ENCODE measurements at regions of chr6 and their contacts with region 1.

Region 1: GRCh38 chr6:52517502-52518278 is 59.2 kb downstream of the TRAM2 start:
- DNase-seq: peak; percentile 98
- ATAC-seq: peak; percentile 74
- H3K4me3 ChIP-seq: no peak overlapping the region
- H3K27ac ChIP-seq: peak overlapping the region; percentile 90
- H3K4me1 ChIP-seq: peaks cover 48% of the 10 kb centered on the region
- H3K27me3 ChIP-seq: no peaks in the 10 kb centered on the region
- CTCF ChIP-seq: no peak
- POLR2A ChIP-seq: peak; percentile 72
- RAD21 ChIP-seq: peak; percentile 30; the same call in 1 of the 2 replicates

Region 2: DNA sequence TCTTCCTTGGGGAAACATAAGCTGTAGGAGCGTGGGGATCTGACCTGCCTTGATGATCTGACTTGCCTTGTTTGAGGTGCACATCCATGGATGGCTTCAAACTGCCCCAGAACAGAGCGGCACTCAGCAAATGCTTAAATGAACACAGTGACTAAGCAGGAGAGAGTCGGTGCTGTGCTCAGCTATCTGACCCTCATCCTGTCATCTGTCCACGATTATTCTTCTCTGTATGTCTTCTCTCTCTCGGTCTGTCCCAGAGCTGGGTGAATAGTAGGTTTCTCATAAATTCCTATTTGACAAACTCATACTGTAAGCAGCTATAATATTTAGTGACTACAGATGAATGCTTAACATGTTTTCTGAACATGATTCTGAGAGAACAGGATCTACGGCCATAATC is 21.9 kb after region 1 on chr6:
- CTCF ChIA-PET with region 1: no interaction called
- POLR2A ChIA-PET with region 1: no interaction called
- dilution Hi-C with region 1: no loop called
- in situ Hi-C with region 1: no loop called
- intact Hi-C with region 1: loop called (anchors 1 kb)
- DNase-seq: peak; percentile 87
- ATAC-seq: peak; percentile 64
- H3K4me3 ChIP-seq: no peak overlapping the region
- H3K27ac ChIP-seq: peak overlapping the region; percentile 74
- H3K4me1 ChIP-seq: peaks cover 57% of the 10 kb centered on the region
- H3K27me3 ChIP-seq: no peaks in the 10 kb centered on the region
- CTCF ChIP-seq: no peak
- POLR2A ChIP-seq: no peak
- RAD21 ChIP-seq: no peak

Region 3: DNA sequence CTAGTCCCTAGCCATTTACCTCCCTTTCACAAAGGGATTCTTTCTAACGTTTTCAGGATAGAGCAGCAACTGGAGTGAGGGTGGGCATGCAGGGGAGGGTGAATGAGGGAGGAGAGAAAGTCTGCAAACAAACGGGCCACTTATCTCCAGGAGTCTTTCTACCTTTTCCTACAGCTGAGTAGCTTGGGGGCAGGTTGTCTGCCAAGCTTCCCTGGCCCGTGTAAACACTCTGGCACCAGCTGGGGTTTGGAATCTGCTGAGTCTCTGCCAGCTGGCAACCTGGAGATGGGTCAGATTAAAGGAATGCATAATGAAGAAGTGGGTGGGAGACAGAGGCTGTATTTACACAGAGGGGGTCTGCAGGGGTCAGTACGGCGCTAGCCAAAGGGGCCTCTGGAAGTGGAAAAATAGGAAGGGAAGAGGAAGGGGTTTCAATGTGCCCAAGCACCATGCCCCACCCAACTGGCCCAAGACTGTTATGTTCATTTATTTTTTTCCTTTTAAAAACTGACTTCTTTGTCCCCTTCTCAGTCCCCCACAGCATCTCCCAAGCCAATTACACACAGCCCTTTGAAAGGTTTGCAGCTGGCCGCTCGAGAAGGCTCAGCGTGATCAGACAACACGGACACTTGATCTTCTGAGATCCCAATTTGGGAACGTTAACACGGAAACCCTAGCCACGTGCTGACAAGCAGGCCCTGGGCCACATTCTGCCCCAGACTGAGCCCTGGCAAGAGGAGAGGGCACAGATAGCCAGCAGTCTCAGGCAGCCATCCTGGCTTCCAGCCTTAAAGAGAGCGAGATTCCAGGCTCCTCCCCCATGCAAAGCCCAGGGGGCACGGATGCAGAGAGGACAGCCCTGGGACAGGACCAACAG is 33.9 kb after region 1 on chr6:
- CTCF ChIA-PET with region 1: no interaction called
- POLR2A ChIA-PET with region 1: no interaction called
- dilution Hi-C with region 1: no loop called
- in situ Hi-C with region 1: no loop called
- intact Hi-C with region 1: loop called (anchors 1 kb)
- DNase-seq: peak; percentile 91
- ATAC-seq: peak; percentile 47
- H3K4me3 ChIP-seq: no peak overlapping the region
- H3K27ac ChIP-seq: peak overlapping the region; percentile 92
- H3K4me1 ChIP-seq: peaks cover 63% of the 10 kb centered on the region
- H3K27me3 ChIP-seq: no peaks in the 10 kb centered on the region
- CTCF ChIP-seq: no peak
- POLR2A ChIP-seq: no peak
- RAD21 ChIP-seq: no peak

Region 4: DNA sequence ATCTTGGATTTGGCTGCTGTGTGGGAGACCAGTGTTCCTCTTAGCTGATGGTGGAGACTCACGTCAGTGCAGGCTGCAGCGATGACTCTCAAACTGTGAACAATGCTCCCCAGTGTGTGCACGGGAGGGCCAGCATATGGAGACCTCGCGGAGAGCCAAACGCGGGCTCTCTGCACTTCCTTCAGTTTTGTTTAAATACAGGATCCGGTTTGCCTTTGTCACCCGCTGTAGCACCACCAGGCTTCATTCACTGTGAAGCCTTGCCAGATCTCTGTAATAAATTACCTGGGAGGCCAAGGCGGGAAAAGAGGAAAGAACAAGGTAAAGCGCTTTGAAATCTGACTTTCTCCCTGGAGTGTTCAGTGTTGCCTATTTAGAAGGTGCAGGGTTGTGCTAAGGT is 122.5 kb after region 1 on chr6:
- CTCF ChIA-PET with region 1: no interaction called
- POLR2A ChIA-PET with region 1: no interaction called
- dilution Hi-C with region 1: no loop called
- in situ Hi-C with region 1: loop called (anchors 10 kb)
- intact Hi-C with region 1: no loop called
- DNase-seq: peak; percentile 87
- ATAC-seq: peak; percentile 81
- H3K4me3 ChIP-seq: no peak overlapping the region
- H3K27ac ChIP-seq: no peak overlapping the region
- H3K4me1 ChIP-seq: peaks cover 2% of the 10 kb centered on the region; the same call in 1 of the 2 replicates
- H3K27me3 ChIP-seq: no peaks in the 10 kb centered on the region
- CTCF ChIP-seq: no peak
- POLR2A ChIP-seq: no peak
- RAD21 ChIP-seq: no peak

Region 5: GRCh38 chr6:52741872-52742271 is 224.2 kb after region 1 on chr6:
- CTCF ChIA-PET with region 1: no interaction called
- POLR2A ChIA-PET with region 1: no interaction called
- dilution Hi-C with region 1: no loop called
- in situ Hi-C with region 1: no loop called
- intact Hi-C with region 1: no loop called
- DNase-seq: no peak
- ATAC-seq: no peak
- H3K4me3 ChIP-seq: no peak overlapping the region
- H3K27ac ChIP-seq: no peak overlapping the region
- H3K4me1 ChIP-seq: no peaks in the 10 kb centered on the region
- H3K27me3 ChIP-seq: peaks cover 1% of the 10 kb centered on the region; the same call in 1 of the 2 replicates
- CTCF ChIP-seq: no peak
- POLR2A ChIP-seq: no peak
- RAD21 ChIP-seq: no peak

Region 6: DNA sequence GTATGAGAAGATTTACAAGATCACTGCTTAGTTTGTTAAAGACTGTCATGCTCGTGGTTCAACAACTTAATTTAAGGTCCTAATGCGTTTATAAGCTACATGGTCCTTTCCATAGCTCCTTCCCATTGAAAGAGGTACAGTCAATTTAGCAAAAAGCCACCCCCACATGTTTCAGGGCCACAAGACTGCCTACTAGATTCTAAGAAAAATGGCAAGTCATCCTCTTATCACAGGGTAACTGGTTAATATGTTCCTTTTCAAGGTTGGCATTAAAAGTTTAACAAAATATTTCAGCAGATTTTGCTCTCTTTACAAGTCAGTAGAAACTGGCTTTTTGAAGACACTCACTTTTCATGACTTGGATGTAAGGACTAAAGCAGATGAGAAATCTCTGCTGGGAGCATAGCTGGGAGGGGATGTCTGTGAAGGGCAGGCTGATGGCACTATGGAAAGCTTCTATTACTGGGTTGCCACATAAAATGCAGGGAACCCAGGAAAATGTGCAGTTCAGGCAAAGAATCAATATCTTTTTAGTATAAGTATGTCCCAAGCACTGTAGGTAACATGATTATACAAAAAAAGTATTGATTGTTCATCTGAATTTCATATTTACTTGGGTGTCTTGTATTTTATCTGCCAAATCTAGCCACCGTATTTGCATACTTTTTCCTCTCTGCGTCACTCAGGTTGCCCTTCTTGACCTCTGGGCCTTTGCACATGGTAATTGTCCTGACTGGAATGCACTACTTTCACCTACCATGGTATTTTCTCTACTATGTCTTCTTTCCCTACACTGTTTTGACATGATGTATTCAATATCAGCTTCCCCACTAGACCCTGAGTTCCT is 376.3 kb after region 1 on chr6:
- CTCF ChIA-PET with region 1: no interaction called
- POLR2A ChIA-PET with region 1: no interaction called
- dilution Hi-C with region 1: no loop called
- in situ Hi-C with region 1: no loop called
- intact Hi-C with region 1: no loop called
- DNase-seq: no peak
- ATAC-seq: no peak
- H3K4me3 ChIP-seq: no peak overlapping the region
- H3K27ac ChIP-seq: no peak overlapping the region
- H3K4me1 ChIP-seq: no peaks in the 10 kb centered on the region
- H3K27me3 ChIP-seq: peaks cover 4% of the 10 kb centered on the region
- CTCF ChIP-seq: no peak
- POLR2A ChIP-seq: no peak
- RAD21 ChIP-seq: no peak